B cell (primary cell): ENCODE measurements at regions of chr7 and their contacts with region 1.

Region 1: GRCh38 chr7:44338600-44338999 is 13.2 kb upstream of the CAMK2B start:
- DNase-seq: peak; percentile 85
- ATAC-seq: peak; percentile 94
- H3K4me3 ChIP-seq: peak overlapping the region in 2 of 5 experiments; percentile 18 to 22
- H3K4me3 Mint-ChIP-seq: peak overlapping the region; percentile 60
- H3K27ac ChIP-seq: peak overlapping the region in 1 of 2 donors; percentile 50
- H3K27ac Mint-ChIP-seq: peak overlapping the region; percentile 71
- H3K4me1 ChIP-seq: peaks cover 7 to 9% of the 10 kb centered on the region in 2 donors
- H3K4me1 Mint-ChIP-seq: peaks cover 21% of the 10 kb centered on the region
- H3K27me3 ChIP-seq: no peaks in the 10 kb centered on the region
- H3K27me3 Mint-ChIP-seq: no peaks in the 10 kb centered on the region
- CTCF ChIP-seq: no peak

Region 2: DNA sequence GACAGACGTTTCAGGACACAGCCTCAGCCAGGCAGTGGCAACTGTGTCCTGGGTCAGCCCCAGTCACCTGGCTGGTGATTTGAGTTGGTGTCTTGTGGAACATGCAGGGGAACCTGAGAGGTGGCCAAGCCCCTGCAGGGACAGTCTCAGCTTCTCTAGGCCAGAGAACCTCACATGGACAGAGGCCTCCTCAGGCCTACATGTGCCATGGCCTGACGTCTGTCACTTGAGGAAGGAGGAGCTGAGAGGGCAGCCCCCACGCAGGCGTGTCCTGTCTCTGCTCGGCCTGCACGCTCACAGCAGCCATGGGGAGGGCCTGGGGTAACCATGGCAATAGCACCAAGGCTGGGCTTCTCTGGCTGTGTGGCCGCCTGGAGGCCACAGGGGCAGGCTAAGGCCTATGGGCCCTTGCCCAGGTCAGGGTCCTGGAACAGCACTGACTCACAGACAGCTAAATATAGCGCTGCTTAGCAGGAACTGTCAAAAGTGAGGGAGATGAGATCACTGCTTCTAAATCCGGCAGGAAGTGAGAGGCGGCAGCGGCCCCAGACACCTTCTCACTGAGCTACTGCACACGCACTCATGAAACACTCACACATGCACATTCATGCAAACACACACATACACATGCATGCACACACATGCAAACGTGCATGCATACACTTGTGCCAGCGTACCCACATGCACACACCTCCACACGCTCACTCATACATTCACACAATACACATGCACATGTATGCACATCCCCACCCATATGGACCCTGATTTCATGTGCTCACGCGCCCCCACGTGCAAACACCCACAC is 80.8 kb before region 1 on chr7:
- CTCF ChIA-PET with region 1: no interaction called
- POLR2A ChIA-PET with region 1: no interaction called
- intact Hi-C with region 1: loop called (anchors 5 kb)
- DNase-seq: peak; percentile 67
- ATAC-seq: peak; percentile 73
- H3K4me3 ChIP-seq: peak overlapping the region in 1 of 5 experiments; percentile 39
- H3K4me3 Mint-ChIP-seq: peak overlapping the region; percentile 77
- H3K27ac ChIP-seq: peak overlapping the region; percentile 39 to 58
- H3K27ac Mint-ChIP-seq: peak overlapping the region; percentile 46
- H3K4me1 ChIP-seq: peaks cover 24 to 34% of the 10 kb centered on the region in 2 donors
- H3K4me1 Mint-ChIP-seq: peaks cover 29% of the 10 kb centered on the region
- H3K27me3 ChIP-seq: no peaks in the 10 kb centered on the region
- H3K27me3 Mint-ChIP-seq: no peaks in the 10 kb centered on the region
- CTCF ChIP-seq: no peak